ENCODE measurements at regions of chr12 and their contacts with region 1.

Region 1: GRCh38 chr12:49130151-49131050 is 794 bp downstream of the TUBA1B start:
- DNase-seq: peak; percentile 92
- H3K4me3 Mint-ChIP-seq: peak overlapping the region; percentile 98
- H3K27ac Mint-ChIP-seq: peak overlapping the region; percentile 98
- H3K4me1 Mint-ChIP-seq: peaks cover 38% of the 10 kb centered on the region
- H3K27me3 Mint-ChIP-seq: no peaks in the 10 kb centered on the region

Region 2: GRCh38 chr12:49018261-49019119 is 111.9 kb before region 1 on chr12 and contains the start of gene PRKAG1:
- intact Hi-C with region 1: loop called (anchors 1 kb)
- DNase-seq: peak; percentile 96
- H3K4me3 Mint-ChIP-seq: peak within 1 kb of the TSS; percentile 90
- H3K27ac Mint-ChIP-seq: peak within 1 kb of the TSS; percentile 93
- H3K4me1 Mint-ChIP-seq: peaks cover 25% of the 10 kb centered on the region
- H3K27me3 Mint-ChIP-seq: no peaks in the 10 kb centered on the region
- total RNA-seq, gene PRKAG1: 65.1 and 65.7 TPM in 2 replicates

Region 3: DNA sequence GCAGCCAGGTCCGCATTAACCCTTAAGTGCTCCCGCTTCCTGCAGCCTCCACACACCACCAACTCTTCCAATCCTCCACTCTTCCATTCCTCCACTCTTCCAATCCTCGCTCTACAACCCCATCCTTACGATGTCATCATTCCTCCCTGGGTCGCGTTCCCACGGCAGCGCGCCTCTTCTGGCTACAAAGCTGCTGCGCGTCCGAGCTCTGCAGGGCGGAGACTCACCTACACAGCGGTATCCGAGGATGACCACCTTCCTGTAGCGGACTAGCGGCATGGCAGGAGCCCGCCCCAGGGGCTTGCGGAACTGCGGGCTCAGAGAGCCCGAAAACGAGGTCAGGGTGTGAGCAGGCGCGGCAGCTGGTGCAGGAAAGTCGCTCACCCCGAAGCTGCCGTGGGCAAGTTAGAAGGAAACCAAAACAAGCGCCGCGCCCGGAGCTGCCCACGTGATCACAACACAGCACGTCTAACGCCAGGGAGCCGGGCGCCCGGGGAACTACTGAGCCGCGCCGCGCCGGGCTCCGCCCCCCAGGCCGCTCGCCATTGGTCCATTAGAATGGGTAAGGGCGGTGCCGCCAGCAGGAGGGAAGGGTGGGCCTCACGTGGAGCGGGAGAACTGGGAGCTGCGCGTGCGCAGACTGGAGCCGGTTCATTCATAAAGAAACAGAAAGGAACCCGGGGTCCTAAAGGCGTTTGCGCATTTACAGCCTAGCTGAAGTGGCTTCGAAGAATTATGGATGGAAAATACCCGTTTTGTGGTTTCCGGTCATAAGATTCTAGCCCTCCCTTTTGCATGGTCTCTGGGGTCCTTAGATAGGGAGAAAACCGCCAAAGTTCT is 60.7 kb before region 1 on chr12 and contains the start of gene RHEBL1:
- intact Hi-C with region 1: loop called (anchors 2 kb)
- DNase-seq: peak; percentile 100
- H3K4me3 Mint-ChIP-seq: peak within 1 kb of the TSS; percentile 98
- H3K27ac Mint-ChIP-seq: peak within 1 kb of the TSS; percentile 92
- H3K4me1 Mint-ChIP-seq: peaks cover 25% of the 10 kb centered on the region
- H3K27me3 Mint-ChIP-seq: no peaks in the 10 kb centered on the region
- total RNA-seq, gene RHEBL1: 14.2 and 16.0 TPM in 2 replicates

Region 4: DNA sequence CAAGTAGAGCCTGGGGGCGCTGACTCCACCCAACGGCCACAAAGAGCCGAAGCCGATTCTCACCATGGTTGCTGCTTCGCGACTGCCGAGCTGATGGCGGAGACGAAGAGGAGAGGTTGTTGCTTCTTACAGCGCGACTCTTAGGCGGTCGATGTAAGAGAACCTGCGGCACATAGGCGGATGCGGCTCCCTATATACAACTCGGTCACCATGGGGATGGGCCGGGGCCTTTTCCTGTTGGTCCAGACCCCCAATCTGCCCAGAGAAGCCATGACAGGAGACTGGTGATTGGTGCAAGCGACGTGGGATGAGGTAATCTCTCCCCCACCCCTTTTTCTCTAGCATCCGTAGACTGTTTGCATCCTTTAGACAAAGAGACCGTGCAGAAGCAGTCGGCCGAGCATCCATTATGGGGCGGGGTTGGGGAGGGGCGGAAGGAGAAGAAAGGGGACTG is 58.5 kb after region 1 on chr12 and contains the start of gene TUBA1A:
- intact Hi-C with region 1: loop called (anchors 1 kb)
- DNase-seq: peak; percentile 96
- H3K4me3 Mint-ChIP-seq: peak within 1 kb of the TSS; percentile 92
- H3K27ac Mint-ChIP-seq: peak within 1 kb of the TSS; percentile 97
- H3K4me1 Mint-ChIP-seq: peaks cover 12% of the 10 kb centered on the region
- H3K27me3 Mint-ChIP-seq: peaks cover 7% of the 10 kb centered on the region
- total RNA-seq, gene TUBA1A: 86.9 and 94.0 TPM in 2 replicates

Region 5: DNA sequence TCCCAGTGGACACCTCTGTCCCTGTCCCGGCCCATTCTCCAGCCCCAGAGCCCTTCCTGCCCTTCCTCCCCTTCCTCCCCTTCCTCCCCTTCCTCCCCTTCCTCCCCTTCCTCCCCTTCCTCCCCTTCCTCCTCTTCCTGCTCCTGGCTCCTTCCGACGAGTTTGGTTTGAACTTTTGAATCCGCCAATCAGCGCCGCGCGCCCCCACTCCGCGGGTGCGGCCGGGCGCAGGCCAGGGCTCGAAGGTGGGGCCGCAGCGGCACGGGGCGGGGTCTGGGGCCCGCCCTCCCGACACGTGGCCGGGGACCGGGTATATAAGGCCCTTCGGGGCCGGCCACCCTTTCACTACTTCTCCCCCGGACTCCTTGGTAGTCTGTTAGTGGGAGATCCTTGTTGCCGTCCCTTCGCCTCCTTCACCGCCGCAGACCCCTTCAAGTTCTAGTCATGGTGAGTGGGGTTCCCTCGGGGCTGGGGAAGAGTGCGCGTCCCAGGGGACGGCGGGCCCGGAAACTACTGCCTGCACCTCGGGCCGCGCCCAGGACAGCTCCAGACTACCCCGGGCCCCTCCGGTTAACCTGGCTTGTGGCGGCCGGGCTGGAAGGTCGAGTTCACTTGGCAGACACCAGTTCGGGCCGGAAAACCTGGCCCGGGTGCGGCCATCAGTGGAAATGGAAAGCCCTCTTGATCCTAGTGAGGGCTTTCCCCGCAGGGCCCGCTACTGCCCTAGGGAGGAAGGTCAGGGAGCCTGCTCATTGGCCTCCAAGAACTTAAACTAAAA is 134.5 kb after region 1 on chr12 and contains the start of gene TUBA1C:
- intact Hi-C with region 1: loop called (anchors 1 kb)
- DNase-seq: peak; percentile 92
- H3K4me3 Mint-ChIP-seq: peak within 1 kb of the TSS; percentile 100
- H3K27ac Mint-ChIP-seq: peak within 1 kb of the TSS; percentile 98
- H3K4me1 Mint-ChIP-seq: peaks cover 41% of the 10 kb centered on the region
- H3K27me3 Mint-ChIP-seq: no peaks in the 10 kb centered on the region
- total RNA-seq, gene TUBA1C: 349 and 355 TPM in 2 replicates

Region 6: GRCh38 chr12:49740930-49741881 is 610.8 kb after region 1 on chr12 and contains the start of gene TMBIM6:
- intact Hi-C with region 1: loop called (anchors 5 kb)
- DNase-seq: peak; percentile 99
- H3K4me3 Mint-ChIP-seq: peak within 1 kb of the TSS; percentile 88
- H3K27ac Mint-ChIP-seq: peak within 1 kb of the TSS; percentile 96
- H3K4me1 Mint-ChIP-seq: peaks cover 27% of the 10 kb centered on the region
- H3K27me3 Mint-ChIP-seq: peaks cover 4% of the 10 kb centered on the region
- total RNA-seq, gene TMBIM6: 405 and 431 TPM in 2 replicates